MCF 10A (cell line): ENCODE measurements at regions of chr1 and their contacts with region 1.

Region 1: DNA sequence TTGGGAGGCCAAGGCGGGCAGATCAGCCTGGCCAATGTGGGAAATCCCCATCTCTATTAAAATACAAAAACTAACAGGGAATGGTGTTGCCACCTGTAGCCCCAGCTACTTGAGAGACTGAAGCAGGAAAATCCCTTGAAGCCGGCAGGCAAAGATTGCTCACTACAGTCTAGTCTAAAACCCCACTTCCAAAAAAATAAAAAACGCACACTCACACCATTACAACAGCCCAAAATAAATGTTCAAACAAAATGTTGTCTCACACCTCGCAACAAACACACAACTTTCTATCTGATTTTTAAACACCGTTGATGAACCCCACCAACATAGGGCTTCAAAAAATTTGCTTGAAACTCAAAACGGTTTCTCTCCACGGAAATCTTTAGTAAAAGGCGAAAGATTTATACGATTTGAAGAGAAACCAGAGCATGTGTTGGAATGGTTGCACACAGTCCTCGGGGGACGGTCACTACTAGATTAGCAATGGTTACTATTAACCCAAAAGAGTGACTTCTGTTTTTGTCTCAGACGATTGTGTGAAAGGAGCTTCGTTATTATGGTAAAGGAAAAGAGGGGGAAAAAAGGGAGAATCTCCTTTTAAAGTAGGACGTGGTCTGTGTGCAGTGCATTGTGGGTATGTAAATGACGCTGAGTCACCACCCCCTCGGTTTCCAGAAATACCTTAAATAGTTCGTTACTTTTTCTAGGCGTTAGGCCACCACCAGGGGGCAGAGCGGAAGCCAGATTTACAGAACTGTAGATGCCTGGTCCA is at the start of gene RNU5D-1:
- DNase-seq: peak; percentile 97
- H3K4me3 Mint-ChIP-seq: peak within 1 kb of the TSS; percentile 51
- H3K27ac Mint-ChIP-seq: peak within 1 kb of the TSS; percentile 100
- H3K4me1 Mint-ChIP-seq: peaks cover 26% of the 10 kb centered on the region
- H3K27me3 Mint-ChIP-seq: no peaks in the 10 kb centered on the region
- CTCF ChIP-seq: peak; percentile 77
- total RNA-seq, gene RNU5D-1: not detected in 2 replicates

Region 2: DNA sequence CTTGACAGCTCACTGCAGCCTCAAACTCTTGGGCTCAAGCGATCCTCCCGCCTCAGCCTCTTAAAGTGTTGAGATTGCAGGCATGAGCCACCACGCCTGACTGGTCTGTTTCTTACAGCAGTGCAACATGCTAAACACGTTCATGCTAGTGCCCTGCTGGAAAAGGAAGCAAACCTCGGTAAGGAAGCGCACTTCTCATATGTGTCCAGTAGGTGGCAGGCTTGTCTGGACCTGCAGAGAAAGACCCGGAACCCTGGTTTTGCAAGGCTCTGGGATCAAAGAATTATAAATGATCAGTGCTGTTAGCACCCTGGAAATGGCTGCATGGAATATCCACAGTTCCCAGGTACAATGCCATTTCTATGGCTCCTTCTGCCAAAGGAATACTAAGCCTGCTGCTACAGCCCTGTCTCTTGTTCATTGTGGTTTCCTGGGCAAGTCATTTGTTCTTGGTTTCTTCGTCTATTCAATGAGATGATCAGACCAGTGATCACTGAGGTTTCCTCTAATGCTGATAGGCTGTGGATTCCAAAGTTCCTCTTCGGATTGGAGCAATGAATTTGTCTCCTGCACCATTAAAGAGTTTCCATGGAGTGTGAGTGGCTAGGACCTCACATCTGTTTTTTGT is 15.9 kb before region 1 on chr1:
- CTCF ChIA-PET with region 1: interaction called, 75 read pairs
- POLR2A ChIA-PET with region 1: interaction called, 182 read pairs
- intact Hi-C with region 1: no loop called
- DNase-seq: peak; percentile 77
- H3K4me3 Mint-ChIP-seq: no peak overlapping the region
- H3K27ac Mint-ChIP-seq: no peak overlapping the region
- H3K4me1 Mint-ChIP-seq: peaks cover 7% of the 10 kb centered on the region
- H3K27me3 Mint-ChIP-seq: peaks cover 14% of the 10 kb centered on the region
- CTCF ChIP-seq: peak; percentile 84

Region 3: DNA sequence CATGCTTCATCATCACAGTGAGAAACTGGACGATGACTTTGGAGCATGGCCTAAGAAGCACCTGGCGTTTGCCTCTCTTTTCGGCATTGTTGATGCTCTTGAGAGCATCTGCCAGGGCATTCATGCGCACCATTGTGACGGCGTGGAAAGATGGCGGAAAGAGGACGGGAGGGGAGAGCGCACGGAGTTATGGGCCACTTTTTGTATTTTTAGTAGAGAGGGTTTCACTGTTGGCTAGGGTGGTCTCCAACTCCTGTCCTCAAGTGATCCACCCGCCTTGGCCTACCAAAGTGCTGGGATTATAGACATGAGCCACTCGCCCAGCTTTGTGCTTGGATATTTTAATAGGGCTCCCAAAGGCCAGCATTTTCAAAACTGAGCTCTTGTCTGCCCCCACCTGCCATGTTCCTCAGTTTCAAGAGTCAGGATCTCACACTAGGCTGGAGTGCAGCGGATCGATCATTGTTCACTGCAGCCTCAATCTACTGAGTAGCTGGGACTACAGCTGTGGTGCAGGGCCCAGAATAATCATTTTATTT is 49.7 kb after region 1 on chr1:
- CTCF ChIA-PET with region 1: interaction called, 20 read pairs
- POLR2A ChIA-PET with region 1: interaction called, 93 read pairs
- intact Hi-C with region 1: loop called (anchors 1 kb)
- DNase-seq: no peak
- H3K4me3 Mint-ChIP-seq: no peak overlapping the region
- H3K27ac Mint-ChIP-seq: no peak overlapping the region
- H3K4me1 Mint-ChIP-seq: peaks cover 26% of the 10 kb centered on the region
- H3K27me3 Mint-ChIP-seq: no peaks in the 10 kb centered on the region
- CTCF ChIP-seq: no peak

Region 4: GRCh38 chr1:44799770-44800584 is 69.0 kb after region 1 on chr1 and contains the start of gene PLK3:
- CTCF ChIA-PET with region 1: interaction called, 6 read pairs
- POLR2A ChIA-PET with region 1: interaction called, 24 read pairs
- intact Hi-C with region 1: no loop called
- DNase-seq: peak; percentile 97
- H3K4me3 Mint-ChIP-seq: peak within 1 kb of the TSS; percentile 86
- H3K27ac Mint-ChIP-seq: peak within 1 kb of the TSS; percentile 100
- H3K4me1 Mint-ChIP-seq: peaks cover 23% of the 10 kb centered on the region
- H3K27me3 Mint-ChIP-seq: no peaks in the 10 kb centered on the region
- CTCF ChIP-seq: peak; percentile 85
- total RNA-seq, gene PLK3: 47.2 and 68.0 TPM in 2 replicates

Region 5: GRCh38 chr1:44819608-44820327 is 88.8 kb after region 1 on chr1:
- CTCF ChIA-PET with region 1: interaction called, 14 read pairs
- POLR2A ChIA-PET with region 1: interaction called, 17 read pairs
- intact Hi-C with region 1: loop called (anchors 1 kb)
- DNase-seq: peak; percentile 94
- H3K4me3 Mint-ChIP-seq: peak overlapping the region; percentile 74
- H3K27ac Mint-ChIP-seq: peak overlapping the region; percentile 99
- H3K4me1 Mint-ChIP-seq: peaks cover 37% of the 10 kb centered on the region
- H3K27me3 Mint-ChIP-seq: no peaks in the 10 kb centered on the region
- CTCF ChIP-seq: no peak

Region 6: DNA sequence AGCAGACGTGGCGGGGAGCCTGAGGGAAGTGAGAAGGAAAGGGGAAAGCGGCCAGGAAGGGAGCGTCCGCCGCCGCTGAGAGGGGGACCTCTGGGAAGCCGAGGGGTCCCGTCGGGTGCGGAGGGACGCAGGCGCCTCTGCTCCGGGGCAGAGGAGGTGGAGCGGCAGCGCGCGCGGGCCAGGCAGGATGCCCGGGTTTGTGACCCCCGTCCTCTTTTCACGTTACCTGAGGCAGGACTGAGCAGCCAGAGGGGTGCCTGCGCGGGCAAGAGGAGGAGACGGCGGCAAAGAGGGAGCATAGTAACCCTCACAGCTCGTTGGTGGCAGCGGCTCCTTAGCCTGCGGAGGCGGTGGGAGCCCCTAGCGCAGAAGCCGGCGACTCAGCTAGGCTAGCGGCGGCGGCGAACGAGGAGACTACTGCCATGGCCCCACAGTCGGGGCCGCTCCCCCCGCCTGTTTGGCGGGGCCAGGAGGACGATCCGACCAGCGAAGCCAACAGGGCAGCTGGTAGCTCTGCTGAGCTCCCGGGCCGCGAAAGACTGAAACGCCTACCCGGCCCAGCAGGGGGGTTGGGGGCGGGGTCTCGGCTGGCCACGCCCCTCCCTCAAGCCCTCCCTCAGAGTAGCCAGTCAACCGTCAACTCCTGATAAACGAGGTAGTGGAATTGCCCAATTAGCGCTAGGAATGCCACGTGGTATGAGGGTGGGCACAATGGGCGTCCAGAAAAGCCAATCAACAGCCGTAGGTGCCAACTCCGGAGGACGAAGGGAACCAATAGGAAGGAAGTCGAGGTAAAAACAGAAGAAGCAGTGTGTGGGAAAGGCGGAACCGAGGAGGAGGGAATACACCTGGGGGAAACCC is 759.9 kb after region 1 on chr1 and contains the start of gene TESK2:
- CTCF ChIA-PET with region 1: interaction called, 6 read pairs
- POLR2A ChIA-PET with region 1: no interaction called
- intact Hi-C with region 1: loop called (anchors 5 kb)
- DNase-seq: peak; percentile 100
- H3K4me3 Mint-ChIP-seq: no peak within 1 kb of the TSS
- H3K27ac Mint-ChIP-seq: no peak within 1 kb of the TSS
- H3K4me1 Mint-ChIP-seq: peaks cover 5% of the 10 kb centered on the region
- H3K27me3 Mint-ChIP-seq: no peaks in the 10 kb centered on the region
- CTCF ChIP-seq: no peak
- total RNA-seq, gene TESK2: 0.71 and 1.4 TPM in 2 replicates